Vagina (tissue), 2 donors: ENCODE measurements at regions of chr11 and their contacts with region 1.

Region 1: GRCh38 chr11:76670485-76671236 is at the start of gene LRRC32:
- DNase-seq: no peak
- H3K4me3 ChIP-seq: peak within 1 kb of the TSS; percentile 62 to 87
- H3K27ac ChIP-seq: peak within 1 kb of the TSS; percentile 86
- H3K4me1 ChIP-seq: peaks cover 58% of the 10 kb centered on the region
- H3K27me3 ChIP-seq: no peaks in the 10 kb centered on the region
- CTCF ChIP-seq: no peak
- POLR2A ChIP-seq: peak in 1 of 2 donors; percentile 22
- total RNA-seq, gene LRRC32: 66.3 TPM

Region 2: GRCh38 chr11:76329084-76329984 is 341.3 kb before region 1 on chr11:
- intact Hi-C with region 1: no loop called
- DNase-seq: no peak
- H3K4me3 ChIP-seq: no peak overlapping the region
- H3K27ac ChIP-seq: no peak overlapping the region
- H3K4me1 ChIP-seq: no peaks in the 10 kb centered on the region
- H3K27me3 ChIP-seq: no peaks in the 10 kb centered on the region
- CTCF ChIP-seq: no peak
- POLR2A ChIP-seq: no peak

Region 3: DNA sequence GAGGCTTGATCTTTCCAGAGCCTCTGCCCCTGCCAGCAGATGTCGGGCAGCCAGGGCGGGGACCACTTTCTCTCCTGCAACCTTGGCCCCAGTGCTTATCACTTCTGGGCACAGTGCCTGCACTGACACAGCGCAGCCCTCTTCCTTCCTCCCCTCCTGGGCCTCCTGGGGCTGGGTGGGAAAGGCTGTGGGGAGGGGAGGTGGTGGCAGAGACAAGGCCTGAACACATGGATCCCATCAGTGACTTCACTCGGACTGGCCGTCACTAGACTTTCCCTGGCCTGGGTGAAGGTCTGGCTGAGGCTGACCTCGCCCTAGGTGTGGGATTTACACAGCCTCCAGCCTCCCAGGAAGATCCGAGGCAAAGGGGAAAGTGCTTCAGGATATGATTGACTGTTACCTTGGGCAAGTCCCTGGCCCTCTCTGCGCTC is 68.2 kb before region 1 on chr11:
- intact Hi-C with region 1: loop called (anchors 10 kb)
- DNase-seq: peak; percentile 89 to 93
- H3K4me3 ChIP-seq: no peak overlapping the region
- H3K27ac ChIP-seq: peak overlapping the region; percentile 84
- H3K4me1 ChIP-seq: peaks cover 53% of the 10 kb centered on the region
- H3K27me3 ChIP-seq: no peaks in the 10 kb centered on the region
- CTCF ChIP-seq: no peak
- POLR2A ChIP-seq: no peak

Region 4: DNA sequence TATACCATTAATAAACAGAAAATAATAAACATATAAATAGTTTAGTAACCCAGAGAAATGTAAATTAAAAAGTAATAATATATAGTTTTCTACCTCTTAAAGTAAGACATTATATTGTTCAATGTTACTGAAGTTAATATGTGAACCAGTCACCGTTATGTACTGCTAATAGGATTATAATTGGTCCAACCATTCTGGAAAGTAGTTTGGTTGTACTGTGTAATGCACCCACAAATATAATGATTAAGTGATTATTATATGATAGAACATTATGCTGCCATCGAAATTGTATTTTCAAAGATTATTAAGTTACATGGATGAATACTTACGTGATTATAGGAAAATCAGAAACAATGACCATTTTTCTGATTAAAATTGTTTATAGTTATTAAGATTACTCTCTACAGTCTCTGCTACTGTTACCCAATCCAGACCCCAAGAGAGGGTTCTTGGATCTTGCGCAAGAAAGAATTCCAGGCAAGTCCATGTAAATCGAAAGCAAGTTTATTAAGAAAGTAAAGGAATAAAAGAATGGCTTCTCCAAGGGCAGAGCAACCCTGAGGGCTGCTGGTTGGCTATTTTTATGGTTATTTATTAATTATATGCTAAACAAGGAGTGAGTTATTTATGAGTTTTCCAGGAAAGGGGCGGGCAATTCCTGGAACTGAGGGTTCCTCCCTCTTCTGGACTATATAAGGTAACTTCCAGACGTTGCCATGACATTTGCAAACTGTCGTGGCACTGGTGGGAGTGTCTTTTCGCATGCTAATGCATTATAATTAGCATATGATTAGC is 240.2 kb after region 1 on chr11:
- intact Hi-C with region 1: no loop called
- DNase-seq: no peak
- H3K4me3 ChIP-seq: peak overlapping the region in 1 of 2 donors; percentile 10
- H3K27ac ChIP-seq: peak overlapping the region; percentile 16
- H3K4me1 ChIP-seq: peaks cover 9% of the 10 kb centered on the region
- H3K27me3 ChIP-seq: no peaks in the 10 kb centered on the region
- CTCF ChIP-seq: no peak
- POLR2A ChIP-seq: no peak